Right cardiac atrium (tissue), 5 donors: ENCODE measurements at regions of chr12 and their contacts with region 1.

Region 1: GRCh38 chr12:106234449-106234848 is 13.4 kb downstream of the CKAP4 start:
- DNase-seq: no peak
- ATAC-seq: no peak
- H3K4me3 ChIP-seq: no peak overlapping the region
- H3K27ac ChIP-seq: no peak overlapping the region
- H3K4me1 ChIP-seq: peaks cover 5% of the 10 kb centered on the region
- H3K27me3 ChIP-seq: no peaks in the 10 kb centered on the region

Region 2: DNA sequence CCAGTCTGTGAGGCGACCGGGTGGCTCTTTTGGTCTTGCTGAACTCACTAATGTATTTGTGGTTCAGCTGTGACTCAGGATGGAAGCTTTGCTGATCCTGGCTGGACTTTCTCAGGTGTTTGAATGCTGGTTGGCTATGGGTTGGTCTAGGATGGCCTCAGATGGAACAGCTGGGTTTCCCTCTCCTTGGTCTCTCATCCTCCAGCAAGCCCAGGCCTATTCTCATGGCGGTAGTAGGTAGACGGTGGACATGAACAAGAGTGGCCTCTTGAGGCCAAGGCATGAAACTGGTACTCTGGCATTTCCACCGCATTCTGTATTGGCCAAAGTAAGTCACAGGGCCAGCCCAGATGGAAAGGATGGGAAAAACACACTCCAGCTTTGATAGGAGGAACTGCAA is 111.3 kb after region 1 on chr12:
- intact Hi-C with region 1: loop called in 3 of 4 experiments (anchors 5 to 10 kb)
- DNase-seq: peak in 1 of 3 donors; percentile 28
- ATAC-seq: peak; percentile 54 to 56
- H3K4me3 ChIP-seq: no peak overlapping the region
- H3K27ac ChIP-seq: no peak overlapping the region
- H3K4me1 ChIP-seq: peaks cover 8% of the 10 kb centered on the region
- H3K27me3 ChIP-seq: no peaks in the 10 kb centered on the region

Region 3: DNA sequence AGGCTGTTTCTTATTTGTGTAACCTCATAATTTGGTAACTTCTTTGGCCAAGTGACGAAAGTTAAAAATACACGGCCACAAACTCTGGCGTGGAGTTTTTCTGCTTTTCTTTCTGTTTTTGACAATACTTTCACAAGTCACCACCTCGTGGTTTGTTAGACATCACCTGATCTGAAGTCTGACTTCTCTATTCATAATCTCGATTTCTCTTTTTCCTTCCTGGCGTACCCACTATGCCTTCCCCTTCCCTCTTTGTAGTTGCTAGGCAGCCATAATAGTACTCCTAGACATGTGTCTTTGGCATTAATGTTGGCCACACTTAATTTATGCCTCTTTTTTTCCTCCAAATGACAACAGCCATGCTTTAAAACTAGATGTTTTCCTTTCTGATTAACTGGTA is 220.7 kb after region 1 on chr12:
- intact Hi-C with region 1: no loop called
- DNase-seq: no peak
- ATAC-seq: no peak
- H3K4me3 ChIP-seq: no peak overlapping the region
- H3K27ac ChIP-seq: no peak overlapping the region
- H3K4me1 ChIP-seq: no peaks in the 10 kb centered on the region
- H3K27me3 ChIP-seq: no peaks in the 10 kb centered on the region